SK-N-SH (cell line): ENCODE measurements at regions of chr9 and their contacts with region 1.

Region 1: GRCh38 chr9:35071814-35072460 is 488 bp downstream of the VCP start:
- DNase-seq: peak; percentile 92
- H3K4me3 ChIP-seq: peak overlapping the region; percentile 89 to 97
- H3K27ac ChIP-seq: peak overlapping the region; percentile 97 to 100
- H3K4me1 ChIP-seq: peaks cover 21 to 22% of the 10 kb centered on the region in 2 experiments
- H3K27me3 ChIP-seq: no peaks in the 10 kb centered on the region
- CTCF ChIP-seq: peak; percentile 43
- EP300 ChIP-seq: no peak
- RAD21 ChIP-seq: no peak

Region 2: DNA sequence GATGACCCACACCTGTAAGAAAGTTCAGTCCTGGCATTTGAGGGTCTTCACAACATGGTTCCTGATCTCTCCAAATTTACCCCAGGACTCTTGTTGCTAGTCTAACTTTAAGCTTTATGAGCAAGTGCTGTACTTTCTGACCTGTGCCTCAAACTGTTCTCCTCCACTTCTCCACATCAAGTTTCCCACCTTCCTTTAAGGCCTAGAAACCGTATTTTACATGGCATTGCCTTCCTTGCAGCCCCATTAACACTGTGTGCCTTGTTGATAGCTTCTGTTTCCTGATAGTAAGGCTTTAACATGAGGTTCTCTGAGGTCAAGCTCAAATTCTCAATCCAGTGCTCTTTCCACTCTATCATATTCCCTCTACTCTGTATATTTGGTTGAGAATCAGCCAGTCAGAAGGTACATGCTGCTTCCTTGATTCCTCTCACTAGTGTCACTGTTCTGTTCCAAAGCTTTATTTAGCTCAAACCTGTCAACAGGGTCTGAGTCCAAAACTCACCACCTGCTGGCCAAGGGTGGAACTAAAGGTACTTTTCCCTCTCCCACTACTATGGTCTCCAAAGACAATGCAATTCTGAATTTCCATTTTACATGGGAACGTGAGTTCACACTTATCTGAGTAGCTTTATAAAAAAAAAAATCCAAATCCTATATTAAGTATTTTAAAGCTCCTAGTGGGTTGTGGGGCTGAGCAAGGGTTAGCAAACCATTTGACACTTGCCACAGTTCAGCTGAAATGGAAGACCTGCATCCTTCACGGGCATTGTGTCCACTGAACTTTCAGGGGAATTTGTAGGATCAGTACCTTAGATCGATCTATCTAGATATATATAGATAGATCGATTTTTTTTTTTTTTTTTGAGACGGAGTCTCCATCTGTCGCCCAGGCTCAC is 20.6 kb before region 1 on chr9:
- CTCF ChIA-PET with region 1: interaction called, 9 read pairs
- POLR2A ChIA-PET with region 1: interaction called, 16 read pairs
- DNase-seq: peak; percentile 67
- H3K4me3 ChIP-seq: no peak overlapping the region
- H3K27ac ChIP-seq: no peak overlapping the region
- H3K4me1 ChIP-seq: no peaks in the 10 kb centered on the region
- H3K27me3 ChIP-seq: no peaks in the 10 kb centered on the region
- CTCF ChIP-seq: peak; percentile 70
- EP300 ChIP-seq: no peak
- RAD21 ChIP-seq: peak; percentile 57

Region 3: GRCh38 chr9:35096035-35096849 is 24.3 kb after region 1 on chr9 and contains the start of gene PIGO:
- CTCF ChIA-PET with region 1: interaction called, 19 read pairs
- POLR2A ChIA-PET with region 1: interaction called, 6 read pairs
- DNase-seq: peak; percentile 92
- H3K4me3 ChIP-seq: peak within 1 kb of the TSS; percentile 84 to 99
- H3K27ac ChIP-seq: peak within 1 kb of the TSS; percentile 95 to 96
- H3K4me1 ChIP-seq: peaks cover 5 to 11% of the 10 kb centered on the region in 2 experiments; a peak in 1 of 4 replicates
- H3K27me3 ChIP-seq: no peaks in the 10 kb centered on the region
- CTCF ChIP-seq: peak; percentile 81
- EP300 ChIP-seq: no peak; a peak in 1 of 4 replicates
- RAD21 ChIP-seq: peak; percentile 63
- polyA plus RNA-seq, gene PIGO: 31.0 and 38.5 TPM in 2 replicates

Region 4: DNA sequence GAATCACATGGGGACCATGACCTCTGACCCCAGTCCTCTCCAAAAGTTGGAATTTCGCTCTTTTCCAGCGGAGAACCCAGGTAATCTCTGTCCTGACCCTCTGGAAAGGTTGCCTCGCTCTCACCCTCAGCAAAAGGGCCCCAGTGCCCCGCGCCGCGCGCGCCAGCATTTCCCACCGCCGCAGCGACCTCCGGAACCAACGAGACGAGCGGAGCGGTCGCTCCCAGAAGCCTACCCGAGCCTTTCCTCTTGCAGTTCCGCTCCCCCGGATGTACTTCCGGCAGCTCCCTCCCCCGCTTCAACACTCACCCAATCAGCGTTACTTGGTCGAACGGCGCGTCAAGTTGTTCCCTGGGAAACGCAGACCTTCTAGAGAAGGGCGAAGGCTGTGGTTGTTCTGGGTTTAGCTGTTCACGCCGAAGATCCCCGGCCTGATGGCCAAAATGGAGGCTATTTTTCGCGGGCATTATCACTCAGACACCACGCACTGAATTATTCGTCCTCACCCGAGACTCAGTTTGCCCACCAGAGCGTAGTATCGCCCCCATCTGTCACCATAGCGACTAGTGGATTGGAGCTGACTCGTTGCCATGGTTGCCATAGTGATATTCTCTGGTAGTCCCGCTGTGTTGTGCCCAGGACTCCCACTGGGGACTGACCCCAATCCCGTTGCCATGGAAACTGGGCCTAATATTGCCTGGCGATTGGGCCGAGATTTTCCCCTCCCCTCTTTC is 31.2 kb after region 1 on chr9 and contains the start of gene STOML2:
- CTCF ChIA-PET with region 1: interaction called, 19 read pairs
- POLR2A ChIA-PET with region 1: interaction called, 12 read pairs
- DNase-seq: peak; percentile 96
- H3K4me3 ChIP-seq: peak within 1 kb of the TSS; percentile 75 to 84
- H3K27ac ChIP-seq: peak within 1 kb of the TSS; percentile 86 to 94
- H3K4me1 ChIP-seq: peaks cover 15 to 25% of the 10 kb centered on the region in 2 experiments; a peak in 3 of 4 replicates
- H3K27me3 ChIP-seq: no peaks in the 10 kb centered on the region
- CTCF ChIP-seq: no peak
- EP300 ChIP-seq: no peak; a peak in 1 of 4 replicates
- RAD21 ChIP-seq: no peak
- polyA plus RNA-seq, gene STOML2: 229 and 232 TPM in 2 replicates

Region 5: DNA sequence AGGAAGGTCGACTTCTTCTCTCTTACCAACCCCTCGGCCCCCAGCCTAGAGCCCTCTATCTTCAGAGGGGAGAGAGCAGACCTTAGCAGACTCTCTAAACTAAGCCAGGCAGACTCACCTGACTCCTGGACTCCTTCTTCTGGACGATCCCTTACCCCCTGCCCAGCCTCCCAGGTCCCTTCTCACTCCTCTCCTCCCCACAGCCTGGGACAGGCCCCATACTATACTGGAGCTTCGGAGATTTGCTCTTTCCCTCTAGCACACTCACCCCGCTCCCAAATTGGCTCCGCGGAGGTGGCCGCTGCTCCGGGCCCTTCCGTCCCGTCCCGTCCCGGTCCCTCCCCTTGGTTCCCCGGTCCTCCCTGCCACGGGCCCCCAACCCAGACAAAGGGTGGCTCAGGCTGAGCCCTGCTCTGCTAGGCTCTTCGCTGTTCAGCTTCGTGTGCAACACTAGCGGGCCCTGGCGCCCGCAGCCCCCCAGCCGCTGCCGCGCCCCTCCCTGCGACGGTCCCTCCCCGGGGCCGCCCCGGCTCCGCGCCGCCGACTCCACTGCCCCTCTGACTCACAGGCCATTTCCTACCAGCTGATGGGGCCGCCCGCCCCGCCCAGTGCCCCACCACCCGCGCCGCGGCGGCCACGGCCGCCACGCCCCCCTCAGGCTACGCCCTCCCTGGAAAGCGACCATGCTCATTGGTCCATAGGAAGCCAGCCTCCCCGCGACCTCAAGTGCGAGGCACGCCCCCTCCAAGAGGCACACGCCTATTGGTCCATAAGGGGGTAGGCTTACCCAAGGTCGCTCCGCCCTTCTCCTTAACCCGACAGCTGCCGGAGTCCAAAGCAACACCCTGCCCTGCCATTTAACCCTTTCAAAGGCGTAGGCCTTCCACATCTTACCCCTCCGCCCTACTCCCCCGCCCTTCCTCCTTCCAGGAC is 39.3 kb after region 1 on chr9:
- CTCF ChIA-PET with region 1: interaction called, 3 read pairs
- POLR2A ChIA-PET with region 1: interaction called, 14 read pairs
- DNase-seq: peak; percentile 96
- H3K4me3 ChIP-seq: peak overlapping the region; percentile 92 to 95
- H3K27ac ChIP-seq: peak overlapping the region; percentile 75 to 97
- H3K4me1 ChIP-seq: peaks cover 35 to 42% of the 10 kb centered on the region in 2 experiments
- H3K27me3 ChIP-seq: no peaks in the 10 kb centered on the region
- CTCF ChIP-seq: no peak
- EP300 ChIP-seq: no peak
- RAD21 ChIP-seq: no peak

Region 6: DNA sequence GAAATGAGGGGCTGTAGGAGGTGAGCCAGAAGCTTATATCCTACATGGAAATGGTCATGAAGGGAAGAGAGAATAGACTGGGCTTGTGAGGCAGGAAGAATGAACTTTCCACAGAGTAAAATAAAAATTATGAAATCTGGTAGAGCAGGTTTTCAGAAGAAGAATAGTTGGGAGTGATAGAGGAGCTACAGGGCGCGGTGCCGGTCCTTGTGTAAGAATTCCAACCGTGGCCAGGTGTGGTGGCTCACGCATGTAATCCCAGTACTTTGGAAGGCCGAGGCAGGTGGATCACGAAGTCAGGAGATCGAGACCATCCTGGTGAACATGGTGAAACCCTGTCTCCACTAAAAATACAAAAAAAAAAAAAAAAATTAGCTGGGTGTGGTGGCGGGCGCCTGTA is 81.0 kb after region 1 on chr9:
- CTCF ChIA-PET with region 1: no interaction called
- POLR2A ChIA-PET with region 1: no interaction called
- DNase-seq: no peak
- H3K4me3 ChIP-seq: no peak overlapping the region
- H3K27ac ChIP-seq: no peak overlapping the region
- H3K4me1 ChIP-seq: no peaks in the 10 kb centered on the region
- H3K27me3 ChIP-seq: no peaks in the 10 kb centered on the region
- CTCF ChIP-seq: no peak
- EP300 ChIP-seq: no peak
- RAD21 ChIP-seq: no peak